ENCODE measurements at regions of chr9 and their contacts with region 1.

Region 1: GRCh38 chr9:69971643-69972449 is 71.8 kb upstream of the MAMDC2 start:
- DNase-seq: peak; percentile 73
- H3K4me3 Mint-ChIP-seq: no peak overlapping the region
- H3K27ac Mint-ChIP-seq: peak overlapping the region; percentile 91
- H3K4me1 Mint-ChIP-seq: peaks cover 25% of the 10 kb centered on the region
- H3K27me3 Mint-ChIP-seq: no peaks in the 10 kb centered on the region
- CTCF ChIP-seq: peak; percentile 94

Region 2: DNA sequence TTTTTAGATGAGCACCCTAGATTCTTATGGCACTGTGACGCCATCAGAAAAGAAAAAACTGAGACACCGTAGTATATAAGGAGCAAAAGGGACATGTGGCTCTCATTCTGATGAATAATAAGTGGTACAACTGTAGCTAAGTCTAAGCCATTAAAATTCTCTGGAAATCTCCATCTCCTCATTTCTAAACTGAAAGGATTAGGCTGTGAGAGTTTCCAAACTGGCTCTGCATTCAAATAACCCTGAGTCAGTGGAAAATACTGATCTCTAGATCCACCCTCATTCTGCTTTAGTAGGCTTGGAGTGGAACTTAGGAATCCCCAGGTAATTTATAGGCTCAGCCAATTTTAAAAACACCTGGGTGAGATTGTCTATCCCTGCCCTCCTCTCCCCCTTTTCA is 240.5 kb before region 1 on chr9:
- CTCF ChIA-PET with region 1: no interaction called
- POLR2A ChIA-PET with region 1: no interaction called
- intact Hi-C with region 1: no loop called
- DNase-seq: no peak
- H3K4me3 Mint-ChIP-seq: no peak overlapping the region
- H3K27ac Mint-ChIP-seq: no peak overlapping the region
- H3K4me1 Mint-ChIP-seq: no peaks in the 10 kb centered on the region
- H3K27me3 Mint-ChIP-seq: no peaks in the 10 kb centered on the region
- CTCF ChIP-seq: no peak

Region 3: GRCh38 chr9:69834591-69835184 is 137.2 kb before region 1 on chr9:
- CTCF ChIA-PET with region 1: no interaction called
- POLR2A ChIA-PET with region 1: no interaction called
- intact Hi-C with region 1: no loop called
- DNase-seq: no peak
- H3K4me3 Mint-ChIP-seq: no peak overlapping the region
- H3K27ac Mint-ChIP-seq: no peak overlapping the region
- H3K4me1 Mint-ChIP-seq: no peaks in the 10 kb centered on the region
- H3K27me3 Mint-ChIP-seq: no peaks in the 10 kb centered on the region
- CTCF ChIP-seq: no peak

Region 4: GRCh38 chr9:69961830-69962229 is 10.0 kb before region 1 on chr9:
- CTCF ChIA-PET with region 1: interaction called, 11 read pairs
- POLR2A ChIA-PET with region 1: interaction called, 5 read pairs
- intact Hi-C with region 1: no loop called
- DNase-seq: no peak
- H3K4me3 Mint-ChIP-seq: no peak overlapping the region
- H3K27ac Mint-ChIP-seq: no peak overlapping the region
- H3K4me1 Mint-ChIP-seq: peaks cover 13% of the 10 kb centered on the region
- H3K27me3 Mint-ChIP-seq: no peaks in the 10 kb centered on the region
- CTCF ChIP-seq: no peak

Region 5: GRCh38 chr9:70043689-70044489 is 72.0 kb after region 1 on chr9 and contains the start of gene MAMDC2:
- CTCF ChIA-PET with region 1: interaction called, 6 read pairs
- POLR2A ChIA-PET with region 1: no interaction called
- intact Hi-C with region 1: loop called (anchors 10 kb)
- DNase-seq: no peak
- H3K4me3 Mint-ChIP-seq: peak within 1 kb of the TSS; percentile 68
- H3K27ac Mint-ChIP-seq: peak within 1 kb of the TSS; percentile 6
- H3K4me1 Mint-ChIP-seq: peaks cover 47% of the 10 kb centered on the region
- H3K27me3 Mint-ChIP-seq: no peaks in the 10 kb centered on the region
- CTCF ChIP-seq: no peak
- total RNA-seq, gene MAMDC2: not detected in 2 replicates

Region 6: DNA sequence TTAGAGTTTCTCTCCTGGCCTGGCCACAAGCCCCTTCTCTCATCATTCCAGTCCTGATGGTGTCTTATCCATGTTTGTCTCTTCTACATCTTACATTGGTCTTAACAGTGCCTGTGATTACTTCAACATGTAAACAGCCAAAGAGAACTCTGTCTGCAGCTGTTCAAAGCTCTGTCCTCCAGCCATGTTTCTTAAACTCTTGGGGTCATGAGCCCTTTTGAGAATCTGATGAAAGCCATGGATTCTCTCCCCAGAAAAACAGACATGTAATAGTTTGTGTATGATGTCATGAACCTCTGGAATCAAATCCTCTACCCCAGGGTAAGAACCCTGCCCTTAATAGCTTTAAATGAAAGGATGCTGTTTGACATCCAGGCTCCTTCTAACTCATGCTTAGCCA is 101.9 kb after region 1 on chr9:
- CTCF ChIA-PET with region 1: interaction called, 11 read pairs
- POLR2A ChIA-PET with region 1: no interaction called
- intact Hi-C with region 1: no loop called
- DNase-seq: no peak
- H3K4me3 Mint-ChIP-seq: no peak overlapping the region
- H3K27ac Mint-ChIP-seq: no peak overlapping the region
- H3K4me1 Mint-ChIP-seq: no peaks in the 10 kb centered on the region
- H3K27me3 Mint-ChIP-seq: no peaks in the 10 kb centered on the region
- CTCF ChIP-seq: no peak

Region 7: DNA sequence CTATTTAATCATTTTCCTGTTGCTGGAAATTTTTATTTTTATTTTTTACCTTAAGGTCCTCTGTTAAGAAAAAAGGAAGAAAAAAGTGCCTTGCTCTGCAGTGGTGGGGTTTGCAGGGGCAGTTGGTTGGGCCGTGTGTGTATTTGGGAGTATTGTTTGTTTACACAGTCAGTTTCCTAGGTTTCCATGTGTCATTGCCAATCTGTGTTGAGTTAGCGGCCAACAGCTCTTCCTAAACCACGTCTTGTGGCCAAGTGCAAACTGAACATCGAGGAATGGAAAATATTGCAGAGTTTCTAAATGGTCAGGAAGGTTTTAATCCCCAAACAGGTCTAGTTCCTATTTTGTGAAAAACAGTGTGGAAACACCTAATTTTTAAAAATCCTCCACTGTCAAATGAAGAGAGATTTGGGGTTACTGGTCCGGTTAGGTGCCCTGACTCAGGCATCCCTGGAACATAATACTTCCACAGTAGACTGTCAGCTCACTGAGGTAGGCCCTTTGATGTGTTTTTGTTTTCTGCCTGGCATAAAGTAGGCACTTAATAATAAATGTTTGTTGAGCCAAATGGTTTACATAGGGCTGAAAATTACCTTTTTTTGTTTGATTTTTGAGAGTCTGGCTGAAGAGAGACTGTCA is 108.8 kb after region 1 on chr9:
- CTCF ChIA-PET with region 1: interaction called, 10 read pairs
- POLR2A ChIA-PET with region 1: no interaction called
- intact Hi-C with region 1: no loop called
- DNase-seq: peak; percentile 65
- H3K4me3 Mint-ChIP-seq: no peak overlapping the region
- H3K27ac Mint-ChIP-seq: peak overlapping the region; percentile 20
- H3K4me1 Mint-ChIP-seq: peaks cover 25% of the 10 kb centered on the region
- H3K27me3 Mint-ChIP-seq: no peaks in the 10 kb centered on the region
- CTCF ChIP-seq: no peak

Region 8: GRCh38 chr9:70120834-70121510 is 149.1 kb after region 1 on chr9:
- CTCF ChIA-PET with region 1: interaction called, 684 read pairs
- POLR2A ChIA-PET with region 1: no interaction called
- intact Hi-C with region 1: no loop called
- DNase-seq: peak; percentile 85
- H3K4me3 Mint-ChIP-seq: no peak overlapping the region
- H3K27ac Mint-ChIP-seq: no peak overlapping the region
- H3K4me1 Mint-ChIP-seq: peaks cover 29% of the 10 kb centered on the region
- H3K27me3 Mint-ChIP-seq: no peaks in the 10 kb centered on the region
- CTCF ChIP-seq: peak; percentile 7

Region 9: GRCh38 chr9:70229579-70229978 is 257.7 kb after region 1 on chr9:
- CTCF ChIA-PET with region 1: interaction called, 3 read pairs
- POLR2A ChIA-PET with region 1: no interaction called
- intact Hi-C with region 1: loop called (anchors 1 kb)
- DNase-seq: peak; percentile 33
- H3K4me3 Mint-ChIP-seq: no peak overlapping the region
- H3K27ac Mint-ChIP-seq: no peak overlapping the region
- H3K4me1 Mint-ChIP-seq: no peaks in the 10 kb centered on the region
- H3K27me3 Mint-ChIP-seq: no peaks in the 10 kb centered on the region
- CTCF ChIP-seq: peak; percentile 29

Measured in MCF 10A (cell line).